Body of pancreas (tissue), 4 donors: ENCODE measurements at regions of chr14 and their contacts with region 1.

Region 1: GRCh38 chr14:23057757-23058653 is 685 bp upstream of the CDH24 start:
- DNase-seq: peak; percentile 87 to 91 (median 88)
- ATAC-seq: peak; percentile 82
- H3K4me3 ChIP-seq: peak overlapping the region; percentile 40 to 63
- H3K27ac ChIP-seq: peak overlapping the region; percentile 56 to 73 (median 68)
- H3K4me1 ChIP-seq: peaks cover 32% of the 10 kb centered on the region
- H3K27me3 ChIP-seq: no peaks in the 10 kb centered on the region
- CTCF ChIP-seq: peak; percentile 87 to 97 (median 94)
- POLR2A ChIP-seq: peak in 1 of 3 donors; percentile 19

Region 2: DNA sequence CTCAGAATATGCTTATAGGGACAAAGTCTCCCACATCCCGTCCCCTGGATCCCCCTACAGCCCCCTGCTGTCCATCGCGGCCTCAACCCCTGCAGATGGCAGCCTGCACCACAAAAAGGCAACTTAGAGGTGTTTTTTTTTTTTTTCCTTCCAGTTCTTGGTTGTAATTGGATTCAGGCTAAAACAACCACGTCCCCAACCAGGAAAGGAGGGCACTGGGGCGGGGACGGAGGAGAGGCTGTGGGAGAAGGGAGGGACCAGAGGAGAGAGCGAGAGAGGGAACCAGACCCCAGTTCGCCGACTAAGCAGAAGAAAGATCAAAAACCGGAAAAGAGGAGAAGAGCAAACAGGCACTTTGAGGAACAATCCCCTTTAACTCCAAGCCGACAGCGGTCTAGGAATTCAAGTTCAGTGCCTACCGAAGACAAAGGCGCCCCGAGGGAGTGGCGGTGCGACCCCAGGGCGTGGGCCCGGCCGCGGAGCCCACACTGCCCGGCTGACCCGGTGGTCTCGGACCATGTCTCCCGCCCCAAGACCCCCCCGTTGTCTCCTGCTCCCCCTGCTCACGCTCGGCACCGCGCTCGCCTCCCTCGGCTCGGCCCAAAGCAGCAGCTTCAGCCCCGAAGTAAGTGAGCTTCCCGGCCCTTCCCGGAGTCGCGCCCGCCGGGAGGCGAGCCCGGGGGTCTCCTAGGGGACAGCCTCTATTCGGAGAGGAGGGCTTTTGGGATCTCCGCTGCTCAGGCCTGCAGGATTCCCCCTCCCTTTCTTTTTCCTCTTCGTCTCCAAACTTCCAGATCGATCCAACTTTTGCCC is 221.5 kb before region 1 on chr14 and contains the start of gene MMP14:
- intact Hi-C with region 1: no loop called
- DNase-seq: peak; percentile 71 to 81 (median 72)
- ATAC-seq: peak; percentile 79
- H3K4me3 ChIP-seq: peak within 1 kb of the TSS; percentile 47 to 67
- H3K27ac ChIP-seq: peak within 1 kb of the TSS; percentile 78 to 88 (median 86)
- H3K4me1 ChIP-seq: peaks cover 28% of the 10 kb centered on the region
- H3K27me3 ChIP-seq: no peaks in the 10 kb centered on the region
- CTCF ChIP-seq: peak in 3 of 7 experiments; percentile 29 to 43 (median 35)
- POLR2A ChIP-seq: peak; percentile 13 to 79 (median 54)
- total RNA-seq, gene MMP14: 55.3 to 65.3 TPM

Region 3: DNA sequence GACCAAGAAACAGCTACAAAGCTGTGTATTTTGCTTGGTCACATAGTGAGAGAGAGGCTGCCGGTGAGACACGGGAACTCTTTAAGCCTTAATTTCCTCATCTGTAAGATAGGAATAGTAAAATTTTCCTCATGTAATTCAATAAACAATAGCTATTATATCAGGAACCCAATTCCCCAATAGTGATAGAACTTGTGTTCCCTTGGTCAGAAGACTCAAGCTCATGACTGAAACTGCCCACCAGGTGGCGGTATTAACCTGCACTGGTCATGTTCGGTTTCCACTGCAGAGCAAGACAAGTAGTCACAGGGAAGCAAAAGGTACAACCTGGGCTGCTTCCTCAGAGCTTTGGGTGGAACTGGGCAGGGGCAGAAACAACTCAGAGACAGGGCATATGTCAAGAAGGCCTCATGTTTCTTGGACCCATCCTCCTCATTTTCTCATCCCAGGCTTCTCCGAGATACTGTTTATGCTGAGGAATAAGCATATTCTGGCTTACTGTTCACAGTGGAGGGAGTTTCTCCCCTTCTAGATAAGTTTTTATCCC is 71.4 kb before region 1 on chr14:
- intact Hi-C with region 1: loop called (anchors 5 kb)
- DNase-seq: peak; percentile 91 to 94 (median 92)
- ATAC-seq: peak; percentile 59
- H3K4me3 ChIP-seq: no peak overlapping the region
- H3K27ac ChIP-seq: no peak overlapping the region
- H3K4me1 ChIP-seq: peaks cover 16% of the 10 kb centered on the region
- H3K27me3 ChIP-seq: no peaks in the 10 kb centered on the region
- CTCF ChIP-seq: peak; percentile 88 to 95 (median 89)
- POLR2A ChIP-seq: no peak